Heart right ventricle (tissue), 16 donors: ENCODE measurements at regions of chr11 and their contacts with region 1.

Region 1: GRCh38 chr11:77547863-77548551 is 41.7 kb upstream of the AQP11 start:
- DNase-seq: peak in 1 of 2 donors; percentile 41
- ATAC-seq: peak in 2 of 8 donors; percentile 35 to 42
- H3K4me3 ChIP-seq: no peak overlapping the region
- H3K27ac ChIP-seq: no peak overlapping the region
- H3K4me1 ChIP-seq: peaks cover 0 to 8% (median 0%) of the 10 kb centered on the region in 9 donors
- H3K27me3 ChIP-seq: no peaks in the 10 kb centered on the region
- CTCF ChIP-seq: peak; percentile 21 to 74 (median 63)

Region 2: DNA sequence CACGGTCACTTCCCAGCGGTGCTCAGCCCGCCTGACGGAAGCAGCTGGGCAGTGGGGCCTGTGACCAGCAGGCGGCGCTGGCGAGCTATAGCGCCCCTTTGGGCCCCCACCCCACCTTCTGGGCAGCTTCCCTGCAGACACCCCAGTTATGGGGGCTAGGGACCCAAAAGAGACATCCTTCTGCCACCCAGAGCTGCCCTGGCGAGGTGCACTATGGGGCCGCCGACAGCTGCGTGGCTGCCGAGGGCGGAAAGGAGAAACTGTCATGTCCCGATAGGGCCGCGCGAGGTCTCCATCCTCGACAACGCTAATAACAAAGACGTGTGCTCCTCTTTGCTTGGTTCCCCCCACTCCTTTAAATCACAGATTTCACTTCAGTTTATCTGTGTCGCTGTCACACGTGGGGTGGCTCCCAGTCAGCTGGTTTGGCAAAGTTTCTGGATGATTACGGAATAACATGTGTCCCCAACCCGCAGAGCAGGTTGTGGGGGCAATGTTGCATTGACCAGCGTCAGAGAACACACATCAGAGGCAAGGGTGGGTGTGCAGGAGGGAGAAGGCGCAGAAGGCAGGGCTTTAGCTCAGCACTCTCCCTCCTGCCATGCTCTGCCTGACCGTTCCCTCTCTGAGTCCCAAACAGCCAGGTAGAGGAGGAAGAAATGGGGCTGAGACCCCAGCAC is 420.6 kb before region 1 on chr11:
- intact Hi-C with region 1: loop called (anchors 1 to 10 kb)
- DNase-seq: peak; percentile 35 to 67
- ATAC-seq: peak; percentile 62 to 86 (median 74)
- H3K4me3 ChIP-seq: peak overlapping the region in 9 of 10 donors; percentile 8 to 56 (median 46)
- H3K27ac ChIP-seq: peak overlapping the region in 4 of 10 donors; percentile 2 to 53 (median 32)
- H3K4me1 ChIP-seq: peaks cover 6 to 43% (median 27%) of the 10 kb centered on the region in 9 donors
- H3K27me3 ChIP-seq: peaks cover 0 to 9% (median 0%) of the 10 kb centered on the region in 7 donors
- CTCF ChIP-seq: peak; percentile 96 to 100 (median 99)

Region 3: GRCh38 chr11:77187776-77188632 is 360.0 kb before region 1 on chr11:
- intact Hi-C with region 1: loop called in 1 of 10 experiments (anchors 5 kb)
- DNase-seq: peak; percentile 78 to 83
- ATAC-seq: peak; percentile 79 to 92 (median 86)
- H3K4me3 ChIP-seq: no peak overlapping the region
- H3K27ac ChIP-seq: no peak overlapping the region
- H3K4me1 ChIP-seq: no peaks in the 10 kb centered on the region
- H3K27me3 ChIP-seq: no peaks in the 10 kb centered on the region
- CTCF ChIP-seq: peak; percentile 68 to 94 (median 91)

Region 4: GRCh38 chr11:77198440-77198849 is 349.6 kb before region 1 on chr11:
- intact Hi-C with region 1: loop called (anchors 2 to 5 kb)
- DNase-seq: no peak
- ATAC-seq: no peak
- H3K4me3 ChIP-seq: no peak overlapping the region
- H3K27ac ChIP-seq: no peak overlapping the region
- H3K4me1 ChIP-seq: peaks cover 0 to 11% (median 4%) of the 10 kb centered on the region in 9 donors
- H3K27me3 ChIP-seq: no peaks in the 10 kb centered on the region
- CTCF ChIP-seq: peak in 1 of 9 donors; percentile 23

Region 5: GRCh38 chr11:77407618-77408017 is 140.4 kb before region 1 on chr11:
- intact Hi-C with region 1: loop called in 1 of 10 experiments (anchors 10 kb)
- DNase-seq: peak in 1 of 2 donors; percentile 31
- ATAC-seq: peak in 6 of 8 donors; percentile 15 to 65 (median 38)
- H3K4me3 ChIP-seq: no peak overlapping the region
- H3K27ac ChIP-seq: no peak overlapping the region
- H3K4me1 ChIP-seq: peaks cover 0 to 48% (median 9%) of the 10 kb centered on the region in 9 donors
- H3K27me3 ChIP-seq: peaks cover 0 to 4% (median 0%) of the 10 kb centered on the region in 7 donors
- CTCF ChIP-seq: no peak

Region 6: GRCh38 chr11:78085972-78086371 is 538.0 kb after region 1 on chr11:
- intact Hi-C with region 1: no loop called
- DNase-seq: no peak
- ATAC-seq: no peak
- H3K4me3 ChIP-seq: no peak overlapping the region
- H3K27ac ChIP-seq: no peak overlapping the region
- H3K4me1 ChIP-seq: peaks cover 0 to 2% (median 0%) of the 10 kb centered on the region in 9 donors
- H3K27me3 ChIP-seq: no peaks in the 10 kb centered on the region
- CTCF ChIP-seq: no peak